ENCODE measurements at regions of chr5 and their contacts with region 1.

Region 1: DNA sequence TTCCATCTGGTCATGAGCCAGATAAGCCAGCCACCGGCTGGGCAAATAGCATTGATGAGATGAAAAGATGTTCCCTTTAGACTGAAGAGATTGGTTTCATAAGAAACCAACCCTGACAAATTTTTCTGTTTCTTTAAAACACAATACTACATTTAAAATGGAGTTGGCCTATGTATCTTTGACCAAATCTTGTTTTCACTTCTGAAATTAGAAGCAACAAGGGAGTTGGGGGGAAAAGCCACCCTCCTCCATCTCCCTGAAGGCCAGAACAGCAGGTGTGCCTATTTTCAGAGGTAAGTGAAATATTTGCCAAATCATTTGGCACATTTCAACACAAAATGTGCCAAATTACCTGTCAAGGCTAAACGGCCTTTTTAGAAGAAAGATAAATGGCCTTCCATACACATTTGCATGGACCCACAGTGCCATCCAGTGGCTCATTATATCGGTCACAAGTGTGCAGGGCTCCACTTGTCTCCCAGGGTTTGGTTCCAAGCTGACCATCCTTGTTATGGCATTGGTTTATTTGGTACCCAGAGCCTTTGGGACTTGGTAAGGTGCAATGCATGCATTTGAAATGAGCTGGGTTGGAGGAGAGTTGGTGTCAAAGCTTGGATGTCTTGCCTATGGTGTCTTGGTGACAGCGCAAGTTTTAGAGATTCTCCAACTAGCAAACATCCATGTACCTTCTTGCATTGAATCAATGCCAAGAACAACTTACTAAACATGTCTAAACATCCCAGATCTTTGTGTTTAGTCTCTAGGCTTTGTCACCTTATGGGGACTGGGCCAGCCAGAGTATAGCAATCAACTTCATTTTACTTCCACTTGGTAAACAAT is 372.0 kb upstream of the KIF2A start:
- DNase-seq: peak; percentile 33
- H3K4me3 Mint-ChIP-seq: no peak overlapping the region
- H3K27ac Mint-ChIP-seq: no peak overlapping the region
- H3K4me1 Mint-ChIP-seq: no peaks in the 10 kb centered on the region
- H3K27me3 Mint-ChIP-seq: peaks cover 3% of the 10 kb centered on the region

Region 2: DNA sequence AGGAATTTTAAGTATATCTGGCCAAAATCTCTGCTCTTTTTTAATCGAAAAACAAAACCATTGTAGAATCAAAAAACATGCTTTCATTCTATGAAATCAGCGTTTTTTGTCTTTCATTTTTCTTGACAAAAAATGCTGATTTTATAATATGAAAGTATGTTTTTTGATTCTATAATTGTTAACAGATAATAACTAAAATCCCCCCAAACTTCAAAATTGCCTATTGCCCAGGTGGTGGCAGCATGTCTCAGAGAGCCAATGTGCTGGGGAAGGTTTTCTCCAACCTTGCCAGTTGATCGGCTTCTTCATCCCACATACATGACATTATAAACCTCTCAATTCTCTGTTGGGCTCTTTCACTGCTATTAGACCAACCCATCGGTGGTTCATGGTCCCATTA is 766.6 kb before region 1 on chr5:
- CTCF ChIA-PET with region 1: no interaction called
- intact Hi-C with region 1: loop called (anchors 5 kb)
- DNase-seq: peak; percentile 22
- H3K4me3 Mint-ChIP-seq: no peak overlapping the region
- H3K27ac Mint-ChIP-seq: no peak overlapping the region
- H3K4me1 Mint-ChIP-seq: peaks cover 10% of the 10 kb centered on the region
- H3K27me3 Mint-ChIP-seq: no peaks in the 10 kb centered on the region

Measured in activated naive CD4-positive, alpha-beta T cell treated with anti-CD3 and anti-CD28 coated beads for 36 hours (primary cell).